ENCODE measurements at regions of chr1 and their contacts with region 1.

Region 1: DNA sequence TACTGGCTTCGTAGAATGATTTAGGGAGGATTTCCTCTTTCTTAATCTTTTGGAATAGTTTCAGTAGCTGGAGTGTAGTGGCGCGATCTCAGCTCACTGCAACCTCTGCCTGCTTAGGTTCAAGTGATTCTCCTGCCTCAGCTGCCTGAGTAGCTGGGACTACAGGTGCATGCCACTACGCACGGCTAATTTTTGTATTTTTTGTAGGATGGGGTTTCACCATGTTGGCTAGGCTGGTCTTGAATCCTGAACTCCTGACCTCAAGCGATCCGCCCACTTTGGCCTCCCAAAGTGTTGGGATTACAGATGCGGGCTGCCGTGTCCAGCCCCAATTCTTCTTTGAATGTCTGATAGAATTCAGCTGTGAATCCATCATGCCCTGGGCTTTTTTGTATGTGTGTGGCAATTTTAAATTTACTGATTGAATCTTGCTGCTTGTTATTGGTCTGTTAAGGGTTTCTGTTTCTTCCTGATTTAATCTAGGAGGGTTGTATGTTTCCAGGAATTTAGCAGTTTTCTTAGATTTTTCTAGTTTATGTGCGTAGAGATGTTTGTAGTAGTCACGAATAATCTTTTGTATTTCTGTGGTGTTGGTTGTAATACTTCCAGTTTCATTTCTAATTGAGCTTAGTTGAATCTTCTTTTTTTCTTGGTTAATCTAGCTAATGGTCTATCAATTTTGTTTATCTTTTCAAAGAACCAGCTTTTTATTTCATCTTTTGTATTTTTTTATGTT is 15.3 kb downstream of the MAN1C1 start:
- DNase-seq: no peak
- H3K4me3 Mint-ChIP-seq: peak overlapping the region; percentile 77
- H3K27ac Mint-ChIP-seq: peak overlapping the region; percentile 86
- H3K4me1 Mint-ChIP-seq: peaks cover 39% of the 10 kb centered on the region
- H3K27me3 Mint-ChIP-seq: peaks cover 39% of the 10 kb centered on the region

Region 2: DNA sequence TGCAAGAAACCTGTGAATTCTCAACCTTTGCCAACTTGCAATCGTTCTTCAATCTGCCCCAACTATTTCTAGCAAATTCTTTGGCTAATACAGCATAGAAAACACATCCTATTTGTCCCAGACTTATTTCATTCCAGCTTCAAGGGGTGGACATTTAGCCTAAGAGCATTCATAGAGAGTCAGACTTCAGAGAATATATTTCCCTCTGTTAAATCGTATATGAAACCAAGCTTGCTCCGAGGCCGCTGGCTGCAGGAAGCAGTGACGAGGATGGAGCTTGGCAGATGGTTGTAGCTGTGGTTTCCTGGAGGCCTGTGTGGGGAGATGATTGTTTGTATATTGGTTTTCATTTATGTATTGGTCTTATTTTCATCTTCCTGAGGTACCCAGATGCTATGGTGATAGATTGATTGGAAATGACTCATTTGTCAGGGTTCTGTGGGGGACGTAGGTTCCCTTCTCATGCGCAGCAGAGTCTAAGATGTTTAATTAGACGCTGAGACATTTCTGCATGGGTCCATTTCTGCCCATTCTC is 10.7 kb after region 1 on chr1:
- intact Hi-C with region 1: loop called (anchors 1 kb)
- DNase-seq: peak; percentile 93
- H3K4me3 Mint-ChIP-seq: peak overlapping the region; percentile 69
- H3K27ac Mint-ChIP-seq: peak overlapping the region; percentile 6
- H3K4me1 Mint-ChIP-seq: peaks cover 38% of the 10 kb centered on the region
- H3K27me3 Mint-ChIP-seq: peaks cover 71% of the 10 kb centered on the region